Activated CD8-positive, alpha-beta memory T cell treated with anti-CD3 and anti-CD28 coated beads, Interleukin-2, amount 10 ng/mL, durations not matched to agents 7 days and 5 days (primary cell): ENCODE measurements at regions of chr21 and their contacts with region 1.

Region 1: GRCh38 chr21:32770871-32771523 is 558 bp downstream of the PAXBP1 start:
- DNase-seq: peak; percentile 78
- ATAC-seq: peak; percentile 59
- H3K4me3 Mint-ChIP-seq: peak overlapping the region; percentile 92
- H3K27ac Mint-ChIP-seq: peak overlapping the region; percentile 88
- H3K4me1 Mint-ChIP-seq: peaks cover 53% of the 10 kb centered on the region
- H3K27me3 Mint-ChIP-seq: peaks cover 3% of the 10 kb centered on the region

Region 2: DNA sequence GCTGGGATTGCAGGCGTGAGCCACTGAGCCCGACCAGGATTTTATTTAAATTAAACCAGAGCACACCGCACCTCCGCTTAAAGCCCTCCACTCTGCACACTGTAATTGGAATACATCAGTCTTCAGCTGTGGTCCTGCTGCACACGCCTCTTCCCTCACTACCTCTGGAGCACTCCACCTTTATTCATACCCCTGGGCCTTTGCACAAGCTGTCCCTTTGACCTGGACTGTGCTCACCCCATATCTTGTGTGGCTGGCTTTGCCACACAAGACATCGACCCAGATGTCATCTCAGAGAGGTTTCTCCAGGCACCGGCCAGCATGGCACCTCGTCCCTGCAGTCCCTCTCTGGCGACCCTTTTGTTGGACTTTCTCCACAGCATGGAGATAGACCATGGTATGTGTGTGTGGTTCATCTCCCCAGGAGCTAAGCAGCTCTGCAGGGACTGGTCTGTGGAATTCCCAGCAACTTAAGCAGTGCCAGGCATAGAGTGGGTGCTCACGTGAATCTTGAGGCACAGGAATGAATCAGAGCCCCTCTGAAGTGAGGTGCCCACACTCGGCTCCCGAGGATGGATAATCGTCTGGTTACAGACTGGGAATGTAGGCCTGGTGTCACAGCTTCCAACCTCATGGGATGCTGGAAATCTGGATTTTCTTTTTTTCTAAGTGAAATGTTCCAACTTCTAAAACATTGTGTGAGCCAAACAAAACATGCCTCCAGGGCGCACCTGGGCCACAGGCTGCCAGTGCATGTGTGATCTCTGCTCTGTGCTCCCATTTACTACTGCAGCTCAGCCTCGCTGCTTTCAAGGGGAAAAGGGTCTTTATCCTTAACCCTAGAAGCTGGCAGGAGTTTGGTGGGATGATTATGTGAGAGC is 296.6 kb before region 1 on chr21:
- CTCF ChIA-PET with region 1: no interaction called
- DNase-seq: no peak
- ATAC-seq: no peak
- H3K4me3 Mint-ChIP-seq: no peak overlapping the region
- H3K27ac Mint-ChIP-seq: no peak overlapping the region
- H3K4me1 Mint-ChIP-seq: peaks cover 9% of the 10 kb centered on the region
- H3K27me3 Mint-ChIP-seq: no peaks in the 10 kb centered on the region

Region 3: GRCh38 chr21:32658524-32658923 is 112.5 kb before region 1 on chr21:
- CTCF ChIA-PET with region 1: no interaction called
- DNase-seq: no peak
- ATAC-seq: no peak
- H3K4me3 Mint-ChIP-seq: no peak overlapping the region
- H3K27ac Mint-ChIP-seq: no peak overlapping the region
- H3K4me1 Mint-ChIP-seq: no peaks in the 10 kb centered on the region
- H3K27me3 Mint-ChIP-seq: no peaks in the 10 kb centered on the region

Region 4: GRCh38 chr21:32727687-32728455 is 43.1 kb before region 1 on chr21 and contains the start of gene SYNJ1:
- CTCF ChIA-PET with region 1: interaction called, 20 read pairs
- DNase-seq: peak; percentile 96
- ATAC-seq: peak; percentile 91
- H3K4me3 Mint-ChIP-seq: peak within 1 kb of the TSS; percentile 96
- H3K27ac Mint-ChIP-seq: peak within 1 kb of the TSS; percentile 96
- H3K4me1 Mint-ChIP-seq: peaks cover 29% of the 10 kb centered on the region
- H3K27me3 Mint-ChIP-seq: no peaks in the 10 kb centered on the region
- total RNA-seq, gene SYNJ1: 15.2 to 21.3 TPM